Vagina (tissue), 2 donors: ENCODE measurements at regions of chr2 and their contacts with region 1.

Region 1: DNA sequence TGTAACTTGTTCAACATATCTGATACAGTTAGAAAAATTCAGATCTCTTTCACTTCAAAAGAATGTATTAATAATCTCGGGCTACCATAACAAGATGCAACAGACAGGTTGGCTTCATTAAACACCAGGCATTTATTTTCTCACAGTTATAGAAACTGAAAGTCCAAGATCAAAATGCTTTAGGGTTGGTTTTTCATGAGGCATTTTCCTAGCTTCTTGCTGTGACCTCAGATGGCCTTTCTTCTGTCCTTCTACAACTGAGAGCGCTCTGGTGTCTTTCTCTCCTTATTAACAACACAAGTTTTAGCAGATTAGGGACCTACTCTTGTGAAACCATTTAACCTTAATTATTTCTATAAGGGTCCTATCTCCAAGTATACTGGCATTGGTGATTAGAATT is 452.5 kb downstream of the ZNF804A start:
- DNase-seq: no peak
- H3K4me3 ChIP-seq: no peak overlapping the region
- H3K27ac ChIP-seq: no peak overlapping the region
- H3K4me1 ChIP-seq: no peaks in the 10 kb centered on the region
- H3K27me3 ChIP-seq: no peaks in the 10 kb centered on the region
- CTCF ChIP-seq: no peak
- POLR2A ChIP-seq: no peak

Region 2: DNA sequence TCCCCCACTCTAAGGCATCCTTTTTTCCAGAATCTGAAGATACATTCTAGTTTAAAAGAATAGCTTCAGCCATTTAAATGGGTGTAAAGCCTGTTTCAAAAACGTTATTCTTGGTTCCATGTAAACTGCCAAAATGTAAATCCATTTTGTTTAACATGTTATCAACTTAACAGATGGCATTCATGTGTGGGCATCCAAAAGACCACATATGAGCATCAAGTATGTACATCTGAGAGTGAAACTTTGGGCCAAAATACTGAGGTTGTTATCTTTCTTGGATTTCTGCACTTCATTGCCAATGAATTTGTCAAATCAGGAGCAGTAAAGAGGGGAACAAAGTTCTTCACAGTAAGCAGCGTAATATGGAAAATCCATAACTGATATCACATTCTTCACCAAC is 57.1 kb before region 1 on chr2:
- intact Hi-C with region 1: loop called (anchors 2 kb)
- DNase-seq: no peak
- H3K4me3 ChIP-seq: no peak overlapping the region
- H3K27ac ChIP-seq: no peak overlapping the region
- H3K4me1 ChIP-seq: no peaks in the 10 kb centered on the region
- H3K27me3 ChIP-seq: no peaks in the 10 kb centered on the region
- CTCF ChIP-seq: no peak
- POLR2A ChIP-seq: no peak